Calu3 (cell line): ENCODE measurements at regions of chr22 and their contacts with region 1.

Region 1: GRCh38 chr22:30089655-30089974 is 9.4 kb downstream of the HORMAD2 start:
- DNase-seq: no peak
- H3K4me3 Mint-ChIP-seq: no peak overlapping the region
- H3K27ac Mint-ChIP-seq: peak overlapping the region; percentile 48
- H3K4me1 Mint-ChIP-seq: peaks cover 39% of the 10 kb centered on the region
- H3K27me3 Mint-ChIP-seq: no peaks in the 10 kb centered on the region
- CTCF ChIP-seq: no peak

Region 2: GRCh38 chr22:29394931-29395581 is 694.6 kb before region 1 on chr22:
- CTCF ChIA-PET with region 1: no interaction called
- intact Hi-C with region 1: loop called (anchors 5 kb)
- DNase-seq: peak; percentile 76
- H3K4me3 Mint-ChIP-seq: no peak overlapping the region
- H3K27ac Mint-ChIP-seq: peak overlapping the region; percentile 33
- H3K4me1 Mint-ChIP-seq: peaks cover 54% of the 10 kb centered on the region
- H3K27me3 Mint-ChIP-seq: peaks cover 6% of the 10 kb centered on the region
- CTCF ChIP-seq: peak; percentile 72

Region 3: DNA sequence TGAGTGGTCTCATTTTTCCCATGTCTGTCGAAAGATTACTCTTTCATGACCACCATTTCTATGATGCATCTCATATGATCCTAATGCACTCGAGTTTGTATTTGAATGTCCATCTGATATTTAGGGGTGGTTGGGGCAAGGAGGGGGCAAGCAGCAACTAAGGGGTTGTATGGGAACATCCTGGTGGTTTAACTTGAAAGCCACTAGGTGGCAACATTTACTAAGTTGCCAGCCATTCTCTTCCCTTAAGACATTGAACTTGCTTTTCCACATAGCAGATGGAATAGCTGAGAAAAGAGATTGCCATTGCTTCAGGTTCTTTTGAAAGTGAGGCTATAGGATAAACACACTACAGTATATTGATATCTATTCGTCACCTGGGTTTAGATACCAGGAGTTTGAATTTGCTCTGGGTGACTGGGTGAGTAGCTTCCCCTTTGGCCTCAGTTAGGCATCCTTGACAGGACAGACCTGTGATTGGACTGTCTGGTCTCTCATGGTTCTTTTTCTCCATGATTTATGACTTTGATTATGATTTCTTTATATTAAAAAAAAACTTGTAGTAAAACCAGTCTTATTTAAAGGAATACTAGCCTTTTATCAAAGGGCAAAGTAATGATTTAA is 453.8 kb before region 1 on chr22:
- CTCF ChIA-PET with region 1: interaction called, 6 read pairs
- intact Hi-C with region 1: loop called (anchors 5 kb)
- DNase-seq: peak; percentile 11
- H3K4me3 Mint-ChIP-seq: no peak overlapping the region
- H3K27ac Mint-ChIP-seq: peak overlapping the region; percentile 52
- H3K4me1 Mint-ChIP-seq: peaks cover 31% of the 10 kb centered on the region
- H3K27me3 Mint-ChIP-seq: no peaks in the 10 kb centered on the region
- CTCF ChIP-seq: peak; percentile 79

Region 4: DNA sequence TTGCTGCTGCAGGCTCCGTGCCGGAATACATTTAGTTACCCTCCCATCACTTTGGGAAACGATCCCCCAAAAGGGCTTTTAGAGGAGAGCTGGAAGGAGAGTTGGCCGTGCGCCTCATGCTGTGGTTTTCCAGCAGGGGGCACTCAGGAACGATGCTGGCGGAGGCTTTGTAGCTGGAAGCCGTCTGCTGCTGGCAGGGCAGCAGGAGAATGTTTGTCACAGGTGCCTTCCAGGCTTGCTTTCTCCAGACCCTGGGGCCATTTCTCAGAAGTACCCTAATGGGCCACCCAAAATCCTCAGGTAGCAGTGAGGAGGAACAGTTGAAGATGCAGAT is 399.8 kb before region 1 on chr22:
- CTCF ChIA-PET with region 1: interaction called, 10 read pairs
- intact Hi-C with region 1: no loop called
- DNase-seq: peak; percentile 60
- H3K4me3 Mint-ChIP-seq: no peak overlapping the region
- H3K27ac Mint-ChIP-seq: no peak overlapping the region
- H3K4me1 Mint-ChIP-seq: no peaks in the 10 kb centered on the region
- H3K27me3 Mint-ChIP-seq: no peaks in the 10 kb centered on the region
- CTCF ChIP-seq: peak; percentile 74

Region 5: DNA sequence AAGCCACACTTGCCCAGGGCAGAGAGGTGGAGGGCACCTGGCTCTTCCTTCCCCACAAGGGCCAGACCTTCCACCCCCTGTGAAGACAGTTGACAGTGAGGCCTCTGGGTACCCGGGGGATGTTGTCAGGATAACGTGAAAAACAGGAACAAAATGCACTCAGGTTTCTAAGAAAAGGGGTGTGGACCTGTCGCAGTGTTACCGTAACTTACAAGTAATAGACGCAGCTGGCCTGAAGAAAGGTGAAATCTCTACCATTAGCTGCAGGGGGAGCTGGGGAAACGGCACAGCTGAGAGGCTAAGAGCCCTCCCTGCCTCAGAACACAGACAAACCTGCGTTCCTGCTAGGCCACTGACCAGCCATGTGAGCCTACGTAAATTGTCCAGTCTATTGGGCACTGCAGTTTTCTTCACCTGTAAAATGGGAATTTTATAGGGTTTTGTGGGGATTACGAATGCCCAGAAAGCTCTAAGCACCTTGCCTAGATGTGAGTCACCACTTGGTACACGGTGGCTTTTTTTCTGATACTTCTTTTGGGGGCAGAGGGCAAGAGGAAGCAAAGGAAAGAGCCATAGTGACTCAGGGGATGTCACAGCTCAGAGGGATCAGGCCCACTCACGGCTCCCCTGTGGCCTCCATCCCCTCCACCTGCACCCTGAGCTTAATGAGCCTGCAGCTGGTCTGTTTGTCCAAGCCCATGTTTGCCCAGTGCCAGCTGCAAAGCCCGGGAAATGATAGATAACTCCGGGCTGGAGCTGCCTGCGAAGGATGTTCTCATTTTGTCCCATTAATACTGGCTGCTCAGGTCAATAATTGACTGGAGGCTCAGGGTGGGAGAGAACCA is 388.2 kb before region 1 on chr22:
- CTCF ChIA-PET with region 1: interaction called, 11 read pairs
- intact Hi-C with region 1: loop called (anchors 1 kb)
- DNase-seq: peak; percentile 66
- H3K4me3 Mint-ChIP-seq: no peak overlapping the region
- H3K27ac Mint-ChIP-seq: peak overlapping the region; percentile 43
- H3K4me1 Mint-ChIP-seq: peaks cover 14% of the 10 kb centered on the region
- H3K27me3 Mint-ChIP-seq: peaks cover 3% of the 10 kb centered on the region
- CTCF ChIP-seq: peak; percentile 29

Region 6: GRCh38 chr22:29772170-29772641 is 317.4 kb before region 1 on chr22:
- CTCF ChIA-PET with region 1: interaction called, 3 read pairs
- intact Hi-C with region 1: loop called (anchors 5 kb)
- DNase-seq: no peak
- H3K4me3 Mint-ChIP-seq: no peak overlapping the region
- H3K27ac Mint-ChIP-seq: peak overlapping the region; percentile 78
- H3K4me1 Mint-ChIP-seq: peaks cover 33% of the 10 kb centered on the region
- H3K27me3 Mint-ChIP-seq: no peaks in the 10 kb centered on the region
- CTCF ChIP-seq: no peak

Region 7: DNA sequence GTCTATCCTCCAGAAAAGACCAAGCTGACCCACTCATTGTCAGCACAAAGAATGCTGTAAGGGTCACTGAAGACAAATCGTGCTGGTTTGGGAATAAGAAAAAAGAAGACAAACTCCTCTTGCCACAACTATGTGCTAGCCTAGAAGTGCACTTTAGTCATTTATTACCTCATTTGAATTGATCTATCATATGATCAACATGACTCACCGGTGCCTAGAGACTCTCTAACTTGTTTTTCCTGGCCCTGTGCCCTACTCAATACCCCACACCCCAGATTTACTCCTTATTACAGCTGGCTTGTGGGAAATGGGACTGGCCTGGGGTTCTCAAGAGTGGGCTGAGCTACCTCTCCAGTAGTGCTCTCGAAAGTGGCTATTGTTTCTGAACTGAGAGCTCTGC is 45.2 kb before region 1 on chr22:
- CTCF ChIA-PET with region 1: interaction called, 3 read pairs
- intact Hi-C with region 1: loop called (anchors 2 kb)
- DNase-seq: peak; percentile 81
- H3K4me3 Mint-ChIP-seq: peak overlapping the region; percentile 59
- H3K27ac Mint-ChIP-seq: peak overlapping the region; percentile 97
- H3K4me1 Mint-ChIP-seq: peaks cover 37% of the 10 kb centered on the region
- H3K27me3 Mint-ChIP-seq: no peaks in the 10 kb centered on the region
- CTCF ChIP-seq: no peak